ENCODE measurements at regions of chr10 and their contacts with region 1.

Region 1: DNA sequence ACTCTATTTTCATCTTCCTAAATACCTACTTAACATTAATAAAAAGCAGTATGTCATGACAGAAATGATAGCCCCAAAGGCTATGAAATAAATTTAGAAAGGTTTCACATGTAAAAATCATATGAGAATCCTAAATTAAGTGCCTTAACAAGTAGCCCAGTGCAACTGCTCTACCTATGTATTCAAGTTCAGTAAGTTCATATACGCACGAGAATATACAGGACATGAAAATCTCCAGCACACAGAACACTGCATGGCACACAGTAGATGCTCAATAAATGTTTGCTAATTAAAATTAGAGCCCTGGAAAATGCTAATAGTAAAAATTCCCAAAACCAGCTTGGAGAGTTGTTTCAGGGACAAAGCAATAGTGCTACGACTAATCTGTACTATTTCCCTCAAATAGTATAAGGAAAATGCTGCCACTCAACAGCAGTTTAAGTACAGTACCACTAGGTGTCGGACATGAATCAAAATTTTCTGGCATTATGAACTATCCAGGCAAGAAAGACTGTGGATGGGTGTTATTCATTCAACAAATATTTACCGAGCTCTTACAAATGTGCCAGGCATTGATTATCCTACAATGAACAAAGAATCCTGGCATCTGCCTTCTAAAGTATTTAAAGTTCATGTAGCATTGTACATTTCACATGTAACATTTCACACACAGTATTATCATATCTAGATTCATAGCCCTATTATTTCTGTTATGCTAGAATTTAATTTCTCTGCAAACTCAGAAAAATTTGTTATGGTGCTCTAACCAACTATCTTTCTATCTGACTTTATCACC is 80.9 kb downstream of the ARHGAP21 start:
- DNase-seq: peak; percentile 78
- H3K4me3 ChIP-seq: no peak overlapping the region
- H3K27ac ChIP-seq: no peak overlapping the region
- H3K4me1 ChIP-seq: peaks cover 27% of the 10 kb centered on the region
- H3K27me3 ChIP-seq: no peaks in the 10 kb centered on the region
- CTCF ChIP-seq: peak; percentile 52 to 63
- POLR2A ChIP-seq: no peak

Region 2: DNA sequence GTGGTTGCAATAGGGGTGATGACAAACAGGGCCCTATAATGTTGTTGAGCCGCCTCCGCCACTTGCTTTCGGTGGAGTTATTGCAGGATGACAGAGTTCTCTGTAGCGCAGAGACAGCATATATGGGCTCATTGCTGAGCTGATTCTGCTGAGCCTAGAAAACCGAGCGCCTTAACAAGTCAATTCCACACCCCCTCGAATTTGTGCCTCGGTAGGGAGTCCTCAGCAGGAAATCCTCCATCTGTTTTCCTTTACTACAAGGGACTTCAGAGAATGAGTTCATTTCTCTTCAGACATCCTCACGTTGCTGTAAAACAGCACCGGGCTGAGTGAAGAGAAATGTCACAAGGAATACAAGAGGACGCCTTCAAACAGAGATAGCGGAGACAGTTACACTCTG is 524.6 kb before region 1 on chr10:
- CTCF ChIA-PET with region 1: no interaction called
- POLR2A ChIA-PET with region 1: no interaction called
- dilution Hi-C with region 1: no loop called
- intact Hi-C with region 1: no loop called
- DNase-seq: no peak
- H3K4me3 ChIP-seq: no peak overlapping the region
- H3K27ac ChIP-seq: no peak overlapping the region
- H3K4me1 ChIP-seq: no peaks in the 10 kb centered on the region
- H3K27me3 ChIP-seq: no peaks in the 10 kb centered on the region
- CTCF ChIP-seq: no peak
- POLR2A ChIP-seq: no peak

Region 3: DNA sequence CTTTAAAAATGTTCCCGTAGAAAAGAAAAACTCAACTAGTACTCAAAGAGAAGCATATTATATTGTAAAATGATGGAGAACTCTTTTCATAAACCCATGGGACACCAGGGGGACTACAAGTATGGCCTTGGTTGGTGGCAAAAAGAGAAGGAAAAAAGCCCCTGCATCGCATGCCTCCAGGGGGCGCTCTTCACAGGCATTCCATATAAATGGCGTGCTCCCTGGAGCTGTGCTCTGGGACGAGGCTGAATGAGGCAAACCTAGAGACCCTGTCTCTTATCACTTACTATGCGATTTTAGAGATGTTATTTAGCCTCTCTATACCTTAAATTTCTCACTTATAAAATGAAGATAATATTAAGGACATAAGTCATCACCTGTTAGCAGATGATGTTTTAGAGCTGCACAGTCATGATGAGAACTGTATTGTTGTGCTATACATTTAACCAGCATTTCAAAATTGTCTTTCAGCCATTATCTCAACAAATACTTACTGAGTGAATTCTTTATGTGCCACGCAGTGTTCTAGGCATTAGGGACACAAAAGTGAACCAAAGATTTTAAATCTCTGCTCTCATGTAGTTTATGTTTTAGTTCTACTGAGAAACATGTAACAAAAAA is 24.9 kb before region 1 on chr10:
- CTCF ChIA-PET with region 1: interaction called, 14 read pairs
- POLR2A ChIA-PET with region 1: no interaction called
- dilution Hi-C with region 1: no loop called
- intact Hi-C with region 1: no loop called
- DNase-seq: peak; percentile 59
- H3K4me3 ChIP-seq: no peak overlapping the region
- H3K27ac ChIP-seq: no peak overlapping the region
- H3K4me1 ChIP-seq: no peaks in the 10 kb centered on the region
- H3K27me3 ChIP-seq: no peaks in the 10 kb centered on the region
- CTCF ChIP-seq: peak; percentile 82 to 87
- POLR2A ChIP-seq: no peak

Region 4: DNA sequence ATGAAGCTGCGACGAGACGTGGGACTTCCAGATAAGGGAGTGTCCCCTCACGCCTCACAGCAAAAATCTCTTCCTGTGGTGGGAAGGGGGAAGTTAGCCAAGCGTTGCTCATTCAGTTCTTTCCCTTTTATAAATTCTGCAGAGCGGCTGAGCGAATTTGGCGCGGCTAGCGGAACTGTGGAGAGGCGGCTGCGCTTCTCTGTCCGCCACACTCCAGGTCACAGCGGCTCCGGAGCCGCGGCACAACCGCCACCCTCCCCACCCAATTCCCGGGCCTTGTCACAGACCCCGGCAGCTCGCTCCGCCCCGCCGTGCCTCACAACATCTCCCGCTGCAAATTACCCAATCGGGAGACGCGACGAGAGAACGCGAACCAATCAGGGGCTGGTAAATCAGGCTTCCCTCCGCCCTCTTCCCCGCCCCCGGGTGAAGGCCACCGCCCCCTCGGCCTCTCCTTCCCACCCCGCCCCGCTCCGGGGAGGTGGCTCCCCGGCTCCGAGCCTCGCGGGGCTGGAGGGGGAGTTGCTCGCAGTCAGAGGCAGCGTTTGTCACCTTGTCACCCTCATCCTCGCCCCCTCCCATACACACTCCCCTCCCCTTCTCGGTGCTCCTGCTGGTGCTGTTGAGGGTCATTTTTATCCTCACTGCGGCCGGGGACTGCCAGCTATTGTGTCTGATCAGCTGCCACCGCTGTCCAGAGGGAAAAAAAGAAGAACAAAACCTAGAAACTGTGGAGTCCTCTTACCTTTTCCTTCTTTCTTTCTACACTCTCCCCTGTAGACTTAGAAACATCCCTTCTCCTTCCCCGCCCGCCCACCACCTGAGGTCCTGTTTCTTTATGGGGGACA is 81.8 kb after region 1 on chr10:
- CTCF ChIA-PET with region 1: interaction called, 27 read pairs
- POLR2A ChIA-PET with region 1: no interaction called
- dilution Hi-C with region 1: no loop called
- intact Hi-C with region 1: loop called (anchors 1 kb)
- DNase-seq: peak; percentile 97
- H3K4me3 ChIP-seq: peak overlapping the region; percentile 50 to 95 (median 92)
- H3K27ac ChIP-seq: peak overlapping the region; percentile 78
- H3K4me1 ChIP-seq: peaks cover 26% of the 10 kb centered on the region
- H3K27me3 ChIP-seq: no peaks in the 10 kb centered on the region
- CTCF ChIP-seq: no peak
- POLR2A ChIP-seq: peak; percentile 94

Region 5: GRCh38 chr10:24858288-24859270 is 215.8 kb after region 1 on chr10:
- CTCF ChIA-PET with region 1: interaction called, 3 read pairs
- POLR2A ChIA-PET with region 1: no interaction called
- dilution Hi-C with region 1: no loop called
- intact Hi-C with region 1: loop called (anchors 5 kb)
- DNase-seq: peak; percentile 69
- H3K4me3 ChIP-seq: no peak overlapping the region
- H3K27ac ChIP-seq: peak overlapping the region; percentile 83
- H3K4me1 ChIP-seq: peaks cover 18% of the 10 kb centered on the region
- H3K27me3 ChIP-seq: no peaks in the 10 kb centered on the region
- CTCF ChIP-seq: no peak
- POLR2A ChIP-seq: no peak

Region 6: DNA sequence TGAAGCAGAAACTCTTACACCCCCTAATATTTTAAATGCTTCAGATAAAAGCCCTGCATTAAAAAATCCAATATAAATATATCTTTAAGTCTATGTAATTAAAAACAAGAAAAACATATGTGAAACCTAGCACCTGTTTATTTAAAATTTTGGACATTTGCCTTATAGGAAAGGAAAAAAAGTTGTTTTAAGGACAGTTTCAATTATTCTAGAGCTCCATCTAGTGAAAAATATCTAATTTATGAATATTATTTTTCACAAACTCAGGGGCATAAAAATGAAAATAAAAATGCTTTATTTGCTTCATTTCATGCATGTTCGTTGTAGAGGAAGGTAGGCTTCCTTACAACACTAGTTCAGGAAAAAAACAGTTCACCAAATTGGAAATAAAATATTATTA is 347.0 kb after region 1 on chr10:
- CTCF ChIA-PET with region 1: interaction called, 32 read pairs
- POLR2A ChIA-PET with region 1: no interaction called
- dilution Hi-C with region 1: no loop called
- intact Hi-C with region 1: loop called (anchors 1 kb)
- DNase-seq: peak; percentile 16
- H3K4me3 ChIP-seq: no peak overlapping the region
- H3K27ac ChIP-seq: no peak overlapping the region
- H3K4me1 ChIP-seq: peaks cover 5% of the 10 kb centered on the region
- H3K27me3 ChIP-seq: no peaks in the 10 kb centered on the region
- CTCF ChIP-seq: no peak
- POLR2A ChIP-seq: no peak

Region 7: DNA sequence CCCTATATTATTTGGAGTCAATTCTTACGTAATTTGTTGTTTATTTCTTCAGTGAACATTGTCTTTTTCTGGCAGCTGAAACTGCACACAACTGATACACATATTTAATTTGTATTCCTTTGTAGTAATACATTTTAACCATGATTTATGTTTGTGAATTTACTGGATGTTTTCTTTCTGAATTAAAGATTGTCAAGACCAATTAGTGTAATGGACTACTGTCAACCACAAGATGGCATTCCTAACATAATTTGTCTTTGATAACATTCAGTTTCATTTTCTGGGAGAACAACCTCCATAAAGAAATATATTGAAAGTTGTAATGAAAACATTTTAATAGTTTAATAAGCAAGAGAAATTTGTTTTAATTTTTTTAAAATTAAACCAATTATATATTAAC is 383.6 kb after region 1 on chr10:
- CTCF ChIA-PET with region 1: interaction called, 4 read pairs
- POLR2A ChIA-PET with region 1: no interaction called
- dilution Hi-C with region 1: no loop called
- intact Hi-C with region 1: loop called (anchors 1 kb)
- DNase-seq: peak; percentile 49
- H3K4me3 ChIP-seq: no peak overlapping the region
- H3K27ac ChIP-seq: no peak overlapping the region
- H3K4me1 ChIP-seq: peaks cover 24% of the 10 kb centered on the region
- H3K27me3 ChIP-seq: no peaks in the 10 kb centered on the region
- CTCF ChIP-seq: peak; percentile 17 to 18
- POLR2A ChIP-seq: no peak

Measured in endothelial cell of umbilical vein (primary cell).